Activated CD8-positive, alpha-beta T cell treated with anti-CD3 and anti-CD28 coated beads, Interleukin-2, amount 10 ng/mL, durations not matched to agents 7 days and 5 days (primary cell): ENCODE measurements at regions of chr21 and their contacts with region 1.

Region 1: DNA sequence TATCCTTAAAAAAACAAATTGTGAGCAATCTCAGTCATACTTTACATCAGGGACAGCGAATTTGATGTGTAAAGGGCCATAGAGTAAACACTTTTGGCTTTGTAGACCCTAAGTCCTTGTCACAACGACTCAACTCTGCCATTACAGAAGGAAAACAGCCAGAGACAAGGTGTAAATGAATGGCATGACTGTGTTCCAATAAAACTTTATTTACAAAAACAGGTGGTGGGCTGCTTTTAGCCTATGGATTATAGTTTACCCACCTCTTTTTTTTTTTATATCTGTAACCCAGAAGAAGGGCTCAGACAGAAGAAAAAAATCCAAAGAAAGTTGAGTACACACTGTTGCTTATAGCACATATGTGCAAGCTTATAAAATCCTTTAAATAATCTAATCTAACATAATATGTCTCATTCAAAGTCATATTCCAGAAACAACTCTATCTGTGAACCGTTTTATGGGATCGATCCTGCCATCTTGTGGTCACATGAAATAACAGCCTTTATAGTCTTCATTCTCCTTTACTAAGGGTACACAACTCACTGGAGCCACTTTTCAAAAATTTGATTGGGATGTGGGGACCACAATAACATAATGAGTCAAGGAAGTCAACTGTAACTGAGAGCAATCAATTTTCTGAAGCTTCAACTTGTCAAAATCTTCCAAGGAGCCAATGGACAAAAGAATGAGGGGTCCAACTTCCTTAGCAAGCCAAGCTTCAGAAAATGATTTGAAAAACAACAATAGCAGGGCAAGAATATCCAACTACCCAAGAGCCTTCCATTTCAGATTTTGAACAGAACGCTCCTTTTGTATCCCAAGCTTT is 142.2 kb upstream of the KRTAP19-8 start:
- DNase-seq: peak; percentile 43
- ATAC-seq: no peak
- H3K4me3 Mint-ChIP-seq: no peak overlapping the region
- H3K27ac Mint-ChIP-seq: no peak overlapping the region
- H3K4me1 Mint-ChIP-seq: peaks cover 59% of the 10 kb centered on the region
- H3K27me3 Mint-ChIP-seq: no peaks in the 10 kb centered on the region

Region 2: DNA sequence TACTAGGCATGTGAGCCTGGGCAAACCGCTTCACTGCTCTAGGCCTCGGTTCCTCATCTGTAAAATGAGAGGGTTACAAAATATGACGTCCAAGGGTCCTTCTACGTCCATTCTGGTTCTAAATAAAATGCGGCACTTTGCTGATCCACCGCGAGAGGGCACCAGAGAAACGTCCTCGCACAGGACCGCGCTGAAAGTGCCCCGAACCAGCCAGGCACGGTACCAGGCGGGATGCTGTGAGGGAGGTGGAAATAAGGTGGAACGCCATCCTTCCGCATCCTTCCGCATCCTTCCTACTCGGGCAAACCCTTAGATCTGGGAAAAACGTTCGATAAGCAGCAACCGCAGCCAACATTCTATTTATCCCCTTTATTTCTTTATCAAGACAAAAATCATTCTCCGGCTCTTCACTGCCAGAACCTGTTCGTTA is 81.9 kb before region 1 on chr21:
- CTCF ChIA-PET with region 1: interaction called, 64 read pairs
- POLR2A ChIA-PET with region 1: interaction called, 10 read pairs
- DNase-seq: peak; percentile 78
- ATAC-seq: peak; percentile 82
- H3K4me3 Mint-ChIP-seq: no peak overlapping the region
- H3K27ac Mint-ChIP-seq: no peak overlapping the region
- H3K4me1 Mint-ChIP-seq: peaks cover 24% of the 10 kb centered on the region
- H3K27me3 Mint-ChIP-seq: peaks cover 8% of the 10 kb centered on the region

Region 3: GRCh38 chr21:31117128-31117916 is 63.1 kb before region 1 on chr21:
- CTCF ChIA-PET with region 1: interaction called, 68 read pairs
- POLR2A ChIA-PET with region 1: no interaction called
- DNase-seq: no peak
- ATAC-seq: no peak
- H3K4me3 Mint-ChIP-seq: no peak overlapping the region
- H3K27ac Mint-ChIP-seq: no peak overlapping the region
- H3K4me1 Mint-ChIP-seq: peaks cover 7% of the 10 kb centered on the region
- H3K27me3 Mint-ChIP-seq: peaks cover 2% of the 10 kb centered on the region

Region 4: GRCh38 chr21:31132574-31133242 is 47.8 kb before region 1 on chr21:
- CTCF ChIA-PET with region 1: interaction called, 42 read pairs
- POLR2A ChIA-PET with region 1: interaction called, 4 read pairs
- DNase-seq: peak; percentile 83
- ATAC-seq: peak; percentile 83
- H3K4me3 Mint-ChIP-seq: peak overlapping the region; percentile 50
- H3K27ac Mint-ChIP-seq: peak overlapping the region; percentile 73
- H3K4me1 Mint-ChIP-seq: peaks cover 47% of the 10 kb centered on the region
- H3K27me3 Mint-ChIP-seq: peaks cover 7% of the 10 kb centered on the region

Region 5: GRCh38 chr21:31198575-31198974 is 18.1 kb after region 1 on chr21:
- CTCF ChIA-PET with region 1: interaction called, 42 read pairs
- POLR2A ChIA-PET with region 1: interaction called, 12 read pairs
- DNase-seq: no peak
- ATAC-seq: peak; percentile 57
- H3K4me3 Mint-ChIP-seq: no peak overlapping the region
- H3K27ac Mint-ChIP-seq: no peak overlapping the region
- H3K4me1 Mint-ChIP-seq: peaks cover 23% of the 10 kb centered on the region
- H3K27me3 Mint-ChIP-seq: no peaks in the 10 kb centered on the region

Region 6: GRCh38 chr21:31220573-31220972 is 40.1 kb after region 1 on chr21:
- CTCF ChIA-PET with region 1: no interaction called
- POLR2A ChIA-PET with region 1: no interaction called
- DNase-seq: no peak
- ATAC-seq: no peak
- H3K4me3 Mint-ChIP-seq: no peak overlapping the region
- H3K27ac Mint-ChIP-seq: no peak overlapping the region
- H3K4me1 Mint-ChIP-seq: no peaks in the 10 kb centered on the region
- H3K27me3 Mint-ChIP-seq: no peaks in the 10 kb centered on the region

Region 7: DNA sequence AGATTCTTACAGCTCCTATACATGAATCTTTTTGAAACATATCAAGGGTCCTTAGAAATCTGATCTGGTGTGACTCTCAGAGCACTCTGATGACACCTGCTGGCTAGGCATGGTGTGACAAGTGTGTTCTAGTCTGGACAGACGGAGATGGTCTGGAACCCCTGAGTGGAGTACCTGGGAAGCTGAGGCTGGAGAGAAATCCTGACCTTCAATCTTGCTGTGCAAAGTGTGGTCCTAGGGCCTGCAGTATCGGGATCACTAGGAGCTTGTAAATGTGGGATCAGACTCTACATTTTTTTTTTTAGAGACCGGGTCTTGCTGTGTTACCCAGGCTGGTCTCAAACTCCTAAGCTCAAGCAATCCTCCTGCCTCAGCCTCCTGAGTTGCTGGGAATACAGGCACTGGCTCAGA is 400.4 kb after region 1 on chr21:
- CTCF ChIA-PET with region 1: interaction called, 28 read pairs
- POLR2A ChIA-PET with region 1: no interaction called
- DNase-seq: peak; percentile 83
- ATAC-seq: peak; percentile 82
- H3K4me3 Mint-ChIP-seq: no peak overlapping the region
- H3K27ac Mint-ChIP-seq: no peak overlapping the region
- H3K4me1 Mint-ChIP-seq: no peaks in the 10 kb centered on the region
- H3K27me3 Mint-ChIP-seq: peaks cover 3% of the 10 kb centered on the region